Dorsolateral prefrontal cortex (tissue), 120 donors: ENCODE measurements at regions of chr5 and their contacts with region 1.

Region 1: GRCh38 chr5:43313035-43313853 is at the start of gene HMGCS1:
- DNase-seq: peak; percentile 95 to 99 (median 99)
- H3K4me3 ChIP-seq: peak within 1 kb of the TSS; percentile 61 to 100 (median 95)
- H3K27ac ChIP-seq: peak within 1 kb of the TSS; percentile 62 to 97 (median 91)
- H3K27me3 ChIP-seq: no peaks in the 10 kb centered on the region
- CTCF ChIP-seq: peak in 28 of 56 donors; percentile 5 to 57 (median 24)
- total RNA-seq, gene HMGCS1: 39.2 to 223 (median 105) TPM

Region 2: DNA sequence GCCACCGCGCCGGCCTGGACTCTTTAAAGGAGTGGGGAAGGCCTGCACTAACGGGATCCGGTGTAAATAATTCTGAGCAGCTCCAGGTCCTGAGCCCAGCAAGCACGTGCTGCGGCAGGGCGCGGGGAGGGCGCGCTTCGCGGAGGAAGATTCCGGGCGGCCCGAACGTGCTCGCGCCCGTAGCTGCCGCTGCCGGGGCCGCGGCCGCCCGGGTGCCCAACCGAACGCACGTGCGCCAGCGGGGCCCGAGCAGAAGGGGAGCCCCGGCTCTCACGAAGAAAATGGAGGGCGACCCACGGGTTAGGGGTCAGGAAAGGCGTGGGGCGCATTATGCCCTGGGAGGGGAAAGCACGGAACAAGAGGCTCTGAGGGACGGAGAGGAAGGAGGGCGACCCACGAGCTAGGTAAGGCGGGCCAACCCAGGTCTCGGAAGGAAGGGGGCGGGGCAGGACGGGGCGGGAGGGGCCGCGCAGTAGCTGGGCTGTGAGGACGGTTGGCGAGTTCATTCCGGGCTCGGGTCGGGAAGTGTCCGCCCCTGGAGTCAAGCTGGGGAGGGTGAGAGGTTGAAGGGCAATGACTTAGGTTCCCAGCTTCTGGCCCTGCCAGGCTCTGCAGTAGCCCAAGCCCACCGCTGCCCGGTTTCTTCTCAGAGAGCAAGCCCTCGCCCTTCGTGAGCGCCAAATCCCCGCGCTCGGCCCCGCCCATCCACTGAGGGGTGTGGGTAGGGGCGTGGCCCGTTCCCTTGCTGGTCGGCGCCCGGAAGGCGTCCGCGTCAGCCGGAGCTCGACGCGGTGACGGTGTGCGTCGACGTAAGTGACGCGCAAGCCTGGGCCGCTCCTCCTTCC is 192.3 kb before region 1 on chr5 and contains the start of gene ZNF131:
- intact Hi-C with region 1: loop called (anchors 2 to 5 kb)
- DNase-seq: peak; percentile 90 to 98 (median 95)
- H3K4me3 ChIP-seq: peak within 1 kb of the TSS; percentile 62 to 99 (median 91)
- H3K27ac ChIP-seq: peak within 1 kb of the TSS; percentile 77 to 100 (median 97)
- H3K27me3 ChIP-seq: no peaks in the 10 kb centered on the region
- CTCF ChIP-seq: peak in 9 of 56 donors; percentile 5 to 35 (median 21)
- total RNA-seq, gene ZNF131: 29.1 to 65.2 (median 49.2) TPM